Naive thymus-derived CD4-positive, alpha-beta T cell (primary cell): ENCODE measurements at regions of chr2 and their contacts with region 1.

Region 1: DNA sequence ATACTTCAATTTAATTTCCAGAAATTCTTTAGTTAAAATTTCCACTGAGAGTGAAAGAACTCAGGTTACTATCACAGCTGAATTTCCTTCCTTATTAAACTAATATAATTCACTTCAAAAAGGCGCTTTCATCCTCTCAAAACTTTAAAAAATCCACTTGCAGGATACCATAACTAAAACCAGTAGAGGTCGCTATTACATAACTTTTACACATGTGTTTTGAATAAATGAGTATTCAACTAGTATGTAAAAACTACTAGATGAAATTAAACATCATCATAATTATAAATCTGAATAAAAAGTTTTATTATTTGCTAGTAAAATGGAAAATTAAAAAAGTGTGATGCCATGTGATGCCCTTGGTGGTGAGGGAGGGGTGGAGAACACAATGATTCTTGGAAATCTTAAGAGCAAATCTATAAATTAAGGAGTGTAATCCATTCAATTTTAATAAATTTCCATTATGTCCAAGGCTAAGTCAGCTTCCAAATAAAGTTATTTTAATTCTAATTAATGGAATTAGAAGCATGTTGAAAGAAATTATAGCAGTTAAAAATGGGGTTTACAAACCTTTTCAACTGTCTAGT is 61.4 kb downstream of the SOS1 start:
- DNase-seq: peak in 7 of 9 donors; percentile 15 to 73 (median 65)
- ATAC-seq: peak; percentile 45
- H3K4me3 ChIP-seq: no peak overlapping the region
- H3K4me3 Mint-ChIP-seq: no peak overlapping the region
- H3K27ac ChIP-seq: no peak overlapping the region
- H3K27ac Mint-ChIP-seq: peak overlapping the region in 2 of 9 donors; percentile 63 to 64
- H3K4me1 ChIP-seq: no peaks in the 10 kb centered on the region
- H3K4me1 Mint-ChIP-seq: peaks cover 0 to 33% (median 0%) of the 10 kb centered on the region in 7 donors
- H3K27me3 ChIP-seq: no peaks in the 10 kb centered on the region
- H3K27me3 Mint-ChIP-seq: no peaks in the 10 kb centered on the region

Region 2: DNA sequence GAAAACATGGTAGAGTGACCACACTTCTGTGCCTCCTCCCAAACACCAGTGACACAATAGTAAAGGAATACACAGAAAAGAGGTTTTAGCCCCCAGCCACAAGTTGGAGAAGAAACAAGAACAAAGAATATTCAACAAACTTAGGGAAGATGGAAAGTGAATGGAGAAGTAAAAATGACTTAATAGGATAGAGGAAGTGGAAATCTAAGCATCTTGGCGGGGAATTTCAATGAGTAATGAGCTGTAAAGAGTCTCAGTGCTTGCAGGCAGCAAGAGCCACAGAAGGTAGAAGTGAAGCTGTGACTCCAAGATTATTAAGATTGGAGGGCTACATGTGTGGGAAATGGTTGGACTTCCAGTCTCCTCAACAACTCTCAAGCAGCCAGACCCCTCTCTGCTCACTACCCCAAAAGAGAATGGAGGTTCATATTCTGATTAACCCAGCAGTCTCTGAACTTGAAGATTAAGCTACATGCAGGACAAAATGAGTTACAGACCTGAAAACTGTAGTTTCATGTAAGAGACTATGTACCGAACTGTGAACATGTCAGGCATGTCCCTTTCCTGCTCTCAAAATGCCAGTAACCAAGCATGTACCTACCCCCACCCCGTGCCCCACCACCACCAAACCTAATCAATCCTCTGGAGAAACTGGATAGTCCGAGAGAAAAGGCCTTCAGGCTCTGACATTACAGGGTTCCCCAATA is 439.8 kb before region 1 on chr2:
- CTCF ChIA-PET with region 1: no interaction called
- POLR2A ChIA-PET with region 1: no interaction called
- intact Hi-C with region 1: no loop called
- DNase-seq: no peak
- ATAC-seq: peak; percentile 70
- H3K4me3 ChIP-seq: no peak overlapping the region
- H3K4me3 Mint-ChIP-seq: no peak overlapping the region
- H3K27ac ChIP-seq: no peak overlapping the region
- H3K27ac Mint-ChIP-seq: no peak overlapping the region
- H3K4me1 ChIP-seq: no peaks in the 10 kb centered on the region
- H3K4me1 Mint-ChIP-seq: peaks cover 0 to 19% (median 0%) of the 10 kb centered on the region in 7 donors
- H3K27me3 ChIP-seq: no peaks in the 10 kb centered on the region
- H3K27me3 Mint-ChIP-seq: peaks cover 0 to 5% (median 0%) of the 10 kb centered on the region in 5 donors

Region 3: DNA sequence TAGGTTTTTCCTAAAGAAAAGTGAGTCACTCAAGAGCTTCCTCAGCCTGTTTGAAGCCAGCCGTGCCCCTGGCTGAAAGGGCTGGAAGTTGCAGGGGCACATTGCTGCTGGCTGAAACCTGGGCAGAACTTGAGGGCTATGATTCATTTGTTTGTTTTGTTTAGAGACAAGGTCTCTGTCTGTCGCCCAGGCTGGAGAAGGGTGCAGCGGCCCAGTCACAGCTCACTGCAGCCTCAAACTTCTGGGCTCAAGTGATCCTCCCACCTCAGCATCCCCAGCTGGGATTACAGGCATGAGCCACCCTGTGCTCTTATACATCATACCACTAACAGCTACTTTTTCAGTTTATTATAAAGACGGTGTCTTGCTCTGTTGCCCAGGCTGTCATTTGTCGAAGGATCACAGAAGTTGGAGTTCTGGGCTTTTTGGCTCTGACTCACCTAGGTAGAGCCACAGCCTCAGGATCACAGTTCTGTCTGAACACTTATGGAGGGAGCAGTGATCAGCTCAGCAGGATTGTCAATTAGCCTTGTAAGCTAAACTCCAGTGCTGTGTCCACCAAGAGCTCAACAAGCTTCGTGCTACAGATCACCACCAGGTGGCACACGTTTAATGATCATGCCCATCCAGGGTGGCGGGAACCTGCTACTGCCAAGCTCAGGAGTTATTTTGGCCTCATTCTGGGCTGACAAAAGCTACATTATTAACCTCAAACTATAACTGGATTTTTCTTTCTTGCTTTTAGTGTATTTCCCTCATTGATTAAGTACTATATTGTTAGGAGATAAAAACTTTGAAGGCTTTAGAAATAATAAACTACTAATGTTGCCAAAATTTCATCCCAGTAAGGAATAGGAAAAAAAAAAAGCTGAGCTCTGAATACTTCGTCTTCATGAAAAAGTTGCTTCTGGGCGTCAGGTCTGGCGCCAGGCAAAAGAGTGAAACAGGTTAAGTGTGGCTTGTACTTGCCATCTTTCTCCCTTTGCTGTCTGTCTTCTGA is 111.9 kb before region 1 on chr2:
- CTCF ChIA-PET with region 1: interaction called, 7 read pairs
- POLR2A ChIA-PET with region 1: no interaction called
- intact Hi-C with region 1: loop called in 1 of 2 experiments (anchors 1 kb)
- DNase-seq: peak; percentile 8 to 57 (median 35)
- ATAC-seq: peak; percentile 67
- H3K4me3 ChIP-seq: no peak overlapping the region
- H3K4me3 Mint-ChIP-seq: no peak overlapping the region
- H3K27ac ChIP-seq: no peak overlapping the region
- H3K27ac Mint-ChIP-seq: peak overlapping the region in 1 of 9 donors; percentile 13
- H3K4me1 ChIP-seq: no peaks in the 10 kb centered on the region
- H3K4me1 Mint-ChIP-seq: peaks cover 0 to 3% (median 0%) of the 10 kb centered on the region in 7 donors
- H3K27me3 ChIP-seq: no peaks in the 10 kb centered on the region
- H3K27me3 Mint-ChIP-seq: peaks cover 0 to 6% (median 0%) of the 10 kb centered on the region in 5 donors

Region 4: DNA sequence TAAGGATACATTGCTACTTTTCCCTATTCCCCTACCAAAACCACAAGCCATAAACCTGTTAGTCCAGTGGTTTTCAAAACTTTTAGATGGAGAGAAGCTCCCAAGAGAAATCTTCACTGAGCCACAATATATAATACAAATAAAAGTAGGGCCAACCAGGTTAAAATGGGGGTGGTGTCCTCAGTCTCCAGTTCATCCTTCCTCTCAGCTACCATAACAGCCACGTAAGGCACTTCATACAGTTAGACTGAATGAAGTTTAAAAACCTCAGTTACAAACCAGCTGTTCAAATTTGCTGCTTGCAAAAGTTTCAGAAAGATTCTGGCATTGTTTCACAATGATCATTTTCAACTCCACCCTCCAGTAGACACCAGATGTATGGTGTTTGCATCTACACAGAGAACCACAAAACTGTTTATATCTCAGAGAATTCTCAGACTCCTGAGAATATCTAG is 35.4 kb after region 1 on chr2:
- CTCF ChIA-PET with region 1: no interaction called
- POLR2A ChIA-PET with region 1: no interaction called
- intact Hi-C with region 1: loop called in 1 of 2 experiments (anchors 5 kb)
- DNase-seq: no peak
- ATAC-seq: peak; percentile 20
- H3K4me3 ChIP-seq: no peak overlapping the region
- H3K4me3 Mint-ChIP-seq: peak overlapping the region in 2 of 10 donors; percentile 11 to 31
- H3K27ac ChIP-seq: no peak overlapping the region
- H3K27ac Mint-ChIP-seq: peak overlapping the region in 5 of 9 donors; percentile 5 to 89 (median 68)
- H3K4me1 ChIP-seq: peaks cover 0 to 13% of the 10 kb centered on the region in 2 donors
- H3K4me1 Mint-ChIP-seq: peaks cover 44 to 71% (median 62%) of the 10 kb centered on the region in 7 donors
- H3K27me3 ChIP-seq: no peaks in the 10 kb centered on the region
- H3K27me3 Mint-ChIP-seq: no peaks in the 10 kb centered on the region